Left cardiac atrium (tissue), 4 donors: ENCODE measurements at regions of chr15 and their contacts with region 1.

Region 1: GRCh38 chr15:26260517-26261133 is 397.5 kb upstream of the ATP10A start:
- DNase-seq: no peak
- ATAC-seq: peak in 1 of 2 donors; percentile 46

Region 2: DNA sequence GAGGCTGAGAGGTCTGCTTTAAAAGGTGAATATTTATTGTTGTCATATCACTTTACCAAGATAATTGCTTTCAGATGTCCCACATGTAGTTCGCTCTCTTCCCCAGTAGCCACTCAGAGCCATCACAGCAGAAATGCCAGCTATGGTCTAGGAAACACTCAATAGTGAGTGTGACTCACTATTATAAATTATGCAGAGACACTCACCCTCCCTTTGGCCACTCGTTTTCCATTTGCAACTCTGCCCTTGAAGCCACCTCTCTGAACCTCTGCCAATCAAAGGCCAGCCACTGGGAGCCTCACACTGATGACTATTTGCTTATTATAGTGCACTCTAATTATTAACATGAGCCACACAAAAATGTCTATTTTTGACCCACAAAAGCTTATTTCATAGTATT is 69.4 kb before region 1 on chr15:
- intact Hi-C with region 1: loop called in 1 of 2 experiments (anchors 5 kb)
- DNase-seq: peak; percentile 28
- ATAC-seq: peak; percentile 81 to 84

Region 3: GRCh38 chr15:26325495-26325894 is 64.9 kb after region 1 on chr15:
- intact Hi-C with region 1: no loop called
- DNase-seq: no peak
- ATAC-seq: no peak

Region 4: DNA sequence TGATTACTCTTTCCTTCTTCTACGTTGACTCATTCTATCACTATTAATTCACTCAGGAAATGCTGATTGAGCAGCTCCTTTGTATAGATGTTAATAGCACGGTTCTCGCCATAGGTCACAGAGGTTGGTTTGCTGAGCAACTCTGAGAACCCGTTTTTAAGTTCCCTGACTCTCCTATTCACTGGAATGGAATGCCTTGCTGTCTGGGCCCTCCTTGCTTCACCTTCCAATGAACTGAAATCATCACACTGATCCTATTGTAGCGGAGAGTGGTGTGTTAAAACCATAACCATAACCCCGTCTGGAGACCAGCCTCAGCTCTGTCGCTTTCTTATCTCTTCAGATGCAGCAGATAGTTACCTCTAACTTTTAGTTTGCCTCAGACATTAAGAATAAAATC is 188.7 kb after region 1 on chr15:
- intact Hi-C with region 1: loop called in 1 of 2 experiments (anchors 10 kb)
- DNase-seq: no peak
- ATAC-seq: peak in 1 of 2 donors; percentile 25

Region 5: GRCh38 chr15:26475554-26475953 is 214.9 kb after region 1 on chr15:
- intact Hi-C with region 1: loop called in 1 of 2 experiments (anchors 10 kb)
- DNase-seq: no peak
- ATAC-seq: peak in 1 of 2 donors; percentile 40